Uterus (tissue), 4 donors: ENCODE measurements at regions of chr5 and their contacts with region 1.

Region 1: GRCh38 chr5:74648835-74649293 is 8.3 kb upstream of the ENC1 start:
- DNase-seq: no peak
- H3K4me3 ChIP-seq: no peak overlapping the region
- H3K27ac ChIP-seq: no peak overlapping the region
- H3K4me1 ChIP-seq: no peaks in the 10 kb centered on the region
- H3K27me3 ChIP-seq: no peaks in the 10 kb centered on the region
- CTCF ChIP-seq: peak; percentile 72 to 81 (median 76)
- POLR2A ChIP-seq: no peak

Region 2: DNA sequence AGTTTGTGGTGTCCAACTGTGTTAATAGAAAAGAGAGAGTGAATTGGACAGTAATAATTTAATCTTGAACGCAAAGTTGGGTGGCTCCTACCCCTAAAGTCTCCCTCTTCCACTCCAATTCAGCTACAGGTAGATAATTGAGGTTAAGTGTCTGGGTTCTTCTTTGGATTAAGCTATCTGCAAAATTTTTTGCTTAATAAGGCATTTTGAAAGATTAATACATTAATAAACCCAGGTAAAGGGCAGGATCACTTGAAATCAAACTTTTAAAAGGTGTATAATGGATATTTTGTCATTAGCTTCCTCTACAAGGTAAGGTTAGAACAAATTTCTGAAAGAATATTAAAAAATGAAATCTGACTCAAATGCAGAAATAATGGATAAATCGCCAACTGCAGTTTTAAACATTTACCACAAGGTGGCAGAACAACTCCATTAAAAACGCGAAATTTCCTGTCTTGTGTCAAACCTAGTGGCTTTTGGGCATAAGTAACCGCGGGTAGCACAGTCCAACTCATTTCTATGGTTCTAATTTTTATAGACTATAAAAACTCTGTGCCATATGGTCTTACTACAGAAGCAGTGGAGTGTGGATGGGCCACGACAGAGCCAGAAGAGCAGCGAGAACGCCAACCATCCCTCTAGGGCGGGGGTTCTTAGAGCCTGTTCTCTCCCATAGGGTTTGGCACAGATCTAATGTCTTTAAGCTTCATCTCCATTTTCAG is 746.4 kb before region 1 on chr5:
- intact Hi-C with region 1: loop called (anchors 5 kb)
- DNase-seq: no peak
- H3K4me3 ChIP-seq: no peak overlapping the region
- H3K27ac ChIP-seq: no peak overlapping the region
- H3K4me1 ChIP-seq: no peaks in the 10 kb centered on the region
- H3K27me3 ChIP-seq: no peaks in the 10 kb centered on the region
- CTCF ChIP-seq: peak; percentile 77 to 90 (median 84)
- POLR2A ChIP-seq: no peak

Region 3: DNA sequence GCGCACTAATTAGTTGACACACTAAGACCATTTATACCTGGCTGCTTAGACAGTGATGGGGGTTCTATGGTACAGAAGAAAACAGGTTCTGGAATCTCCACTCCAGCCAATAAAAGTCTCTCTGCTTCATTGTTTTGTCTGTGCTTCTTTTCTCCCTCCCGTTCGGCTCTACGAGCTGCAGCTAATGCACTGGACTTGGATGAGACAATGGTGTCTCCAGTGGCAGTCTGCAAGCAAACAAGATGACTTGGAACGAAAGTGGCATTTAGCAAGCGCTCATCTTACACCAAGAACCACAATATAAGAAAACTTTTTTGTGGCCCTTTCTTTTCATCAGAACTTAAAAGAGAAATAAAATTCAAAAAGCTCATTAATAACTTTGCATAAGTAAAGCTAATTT is 87.9 kb after region 1 on chr5:
- intact Hi-C with region 1: no loop called
- DNase-seq: no peak
- H3K4me3 ChIP-seq: no peak overlapping the region
- H3K27ac ChIP-seq: no peak overlapping the region
- H3K4me1 ChIP-seq: no peaks in the 10 kb centered on the region
- H3K27me3 ChIP-seq: no peaks in the 10 kb centered on the region
- CTCF ChIP-seq: no peak
- POLR2A ChIP-seq: no peak

Region 4: GRCh38 chr5:74829413-74829812 is 180.5 kb after region 1 on chr5:
- intact Hi-C with region 1: no loop called
- DNase-seq: no peak
- H3K4me3 ChIP-seq: no peak overlapping the region
- H3K27ac ChIP-seq: no peak overlapping the region
- H3K4me1 ChIP-seq: no peaks in the 10 kb centered on the region
- H3K27me3 ChIP-seq: no peaks in the 10 kb centered on the region
- CTCF ChIP-seq: no peak
- POLR2A ChIP-seq: no peak

Region 5: GRCh38 chr5:74851684-74852353 is 203.0 kb after region 1 on chr5:
- intact Hi-C with region 1: no loop called
- DNase-seq: no peak
- H3K4me3 ChIP-seq: no peak overlapping the region
- H3K27ac ChIP-seq: peak overlapping the region in 1 of 2 donors; percentile 12
- H3K4me1 ChIP-seq: no peaks in the 10 kb centered on the region
- H3K27me3 ChIP-seq: no peaks in the 10 kb centered on the region
- CTCF ChIP-seq: no peak
- POLR2A ChIP-seq: no peak

Region 6: DNA sequence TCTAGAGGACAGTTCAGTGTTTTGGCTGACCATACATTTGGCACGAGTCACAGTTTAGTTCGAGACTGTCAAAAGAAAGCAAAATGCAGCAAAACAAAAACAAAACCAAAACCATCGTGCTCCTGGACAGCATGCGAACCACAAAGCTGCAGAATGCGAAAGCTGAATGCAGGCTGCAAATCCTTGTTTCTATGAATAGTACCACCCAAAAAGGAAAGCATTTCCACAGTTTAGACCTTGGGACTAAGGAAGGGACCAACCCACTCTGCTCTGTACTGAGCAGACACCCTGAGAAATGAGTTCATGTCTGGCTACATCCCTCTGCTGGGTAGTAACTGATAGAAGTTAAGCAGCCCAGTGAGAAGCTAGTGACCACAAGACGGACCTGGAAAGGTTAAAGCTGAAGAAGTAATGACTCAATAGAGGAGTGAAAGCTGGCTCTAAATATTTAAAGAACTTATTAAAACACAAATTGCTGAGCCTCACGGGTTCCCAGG is 399.6 kb after region 1 on chr5:
- intact Hi-C with region 1: no loop called
- DNase-seq: no peak
- H3K4me3 ChIP-seq: no peak overlapping the region
- H3K27ac ChIP-seq: no peak overlapping the region
- H3K4me1 ChIP-seq: peaks cover 0 to 9% of the 10 kb centered on the region in 2 donors
- H3K27me3 ChIP-seq: no peaks in the 10 kb centered on the region
- CTCF ChIP-seq: no peak
- POLR2A ChIP-seq: no peak